ENCODE measurements at regions of chr3 and their contacts with region 1.

Region 1: DNA sequence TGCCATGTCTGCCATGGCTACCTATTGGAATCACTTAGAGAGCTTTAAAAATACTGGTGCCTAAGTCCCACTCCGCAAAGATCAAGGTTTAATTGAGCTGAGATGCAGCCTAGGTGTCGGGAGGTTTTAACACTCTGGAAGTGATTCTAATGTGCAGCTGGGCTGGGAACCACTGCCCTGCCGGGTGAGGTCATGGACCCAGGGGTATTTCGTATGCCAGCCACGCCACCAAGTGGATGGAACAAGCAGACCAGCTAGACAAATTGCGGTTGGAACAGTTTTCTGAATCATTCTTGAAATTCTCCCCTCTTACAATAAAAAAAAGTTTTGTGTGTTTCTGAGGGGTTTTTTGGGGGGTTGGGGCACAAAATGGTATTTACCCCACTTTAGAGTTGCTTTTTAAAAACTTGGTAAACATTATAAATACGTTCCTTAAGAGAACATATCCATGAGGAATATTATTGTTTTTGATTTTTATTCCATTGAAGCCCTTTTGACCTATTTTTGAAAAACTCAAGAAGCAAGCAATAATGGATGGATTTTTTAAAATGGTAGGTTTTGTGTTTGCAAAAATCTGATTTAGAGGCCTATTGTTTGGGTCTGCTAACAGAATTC is 66.2 kb upstream of the CSTA start:
- DNase-seq: peak; percentile 81
- H3K4me3 Mint-ChIP-seq: no peak overlapping the region
- H3K27ac Mint-ChIP-seq: peak overlapping the region; percentile 45
- H3K4me1 Mint-ChIP-seq: peaks cover 19% of the 10 kb centered on the region
- H3K27me3 Mint-ChIP-seq: peaks cover 15% of the 10 kb centered on the region

Region 2: GRCh38 chr3:121660356-121661171 is 598.3 kb before region 1 on chr3 and contains the start of gene HCLS1:
- CTCF ChIA-PET with region 1: no interaction called
- POLR2A ChIA-PET with region 1: no interaction called
- intact Hi-C with region 1: loop called (anchors 5 kb)
- DNase-seq: peak; percentile 83
- H3K4me3 Mint-ChIP-seq: peak within 1 kb of the TSS; percentile 97
- H3K27ac Mint-ChIP-seq: peak within 1 kb of the TSS; percentile 100
- H3K4me1 Mint-ChIP-seq: peaks cover 47% of the 10 kb centered on the region
- H3K27me3 Mint-ChIP-seq: no peaks in the 10 kb centered on the region
- total RNA-seq, gene HCLS1: 249 to 251 TPM

Region 3: DNA sequence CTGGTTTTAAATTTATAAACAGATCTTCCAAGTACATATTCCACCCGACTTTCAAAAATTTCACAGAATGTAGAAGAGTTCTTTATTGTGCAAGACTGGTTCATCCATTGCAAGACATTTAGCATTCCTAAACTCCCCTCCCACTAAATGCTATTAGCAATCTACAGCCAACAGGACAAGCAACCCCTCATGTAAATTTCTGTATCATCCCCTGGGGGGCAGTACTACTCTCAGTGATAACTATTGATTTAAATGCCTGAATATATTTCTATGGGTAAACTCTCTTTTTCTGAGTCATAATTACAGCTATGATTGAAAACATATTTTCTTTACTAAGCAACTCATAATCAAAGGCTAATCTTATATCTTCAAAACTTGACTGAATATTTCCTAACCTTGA is 375.4 kb before region 1 on chr3:
- CTCF ChIA-PET with region 1: interaction called, 3 read pairs
- POLR2A ChIA-PET with region 1: no interaction called
- intact Hi-C with region 1: loop called (anchors 1 kb)
- DNase-seq: no peak
- H3K4me3 Mint-ChIP-seq: no peak overlapping the region
- H3K27ac Mint-ChIP-seq: no peak overlapping the region
- H3K4me1 Mint-ChIP-seq: peaks cover 2% of the 10 kb centered on the region
- H3K27me3 Mint-ChIP-seq: no peaks in the 10 kb centered on the region

Region 4: DNA sequence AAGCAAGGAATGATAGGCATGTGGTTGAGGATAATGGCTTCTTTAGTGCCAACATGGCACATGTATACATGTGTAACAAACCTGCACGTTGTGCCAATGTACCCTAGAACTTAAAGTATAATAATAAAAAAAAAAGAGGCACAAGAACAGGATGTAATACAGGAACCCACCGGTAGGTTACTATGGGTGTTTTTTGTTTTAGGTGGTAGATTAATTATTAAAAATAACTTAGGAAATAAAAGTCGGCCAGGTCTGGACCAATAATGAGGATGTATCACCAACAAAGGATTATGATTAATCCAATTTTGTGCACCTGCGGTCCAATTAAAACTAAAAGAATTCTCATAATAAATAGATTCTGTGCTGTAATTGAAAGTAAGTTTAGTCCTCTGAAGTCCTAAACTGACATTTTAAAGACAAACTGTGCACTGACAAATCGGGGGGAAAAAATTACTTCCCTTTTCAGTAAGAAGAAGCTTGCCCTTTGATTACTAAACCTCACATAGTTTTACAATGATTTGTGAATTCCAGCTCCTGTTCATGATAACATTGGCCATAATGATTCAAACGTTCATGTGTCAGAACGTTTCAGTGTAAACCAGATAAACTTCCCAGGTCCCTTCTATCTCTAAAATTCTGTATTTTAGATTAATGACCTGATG is 13.2 kb before region 1 on chr3:
- CTCF ChIA-PET with region 1: interaction called, 8 read pairs
- POLR2A ChIA-PET with region 1: interaction called, 4 read pairs
- intact Hi-C with region 1: loop called (anchors 1 kb)
- DNase-seq: no peak
- H3K4me3 Mint-ChIP-seq: peak overlapping the region; percentile 48
- H3K27ac Mint-ChIP-seq: peak overlapping the region; percentile 43
- H3K4me1 Mint-ChIP-seq: peaks cover 16% of the 10 kb centered on the region
- H3K27me3 Mint-ChIP-seq: peaks cover 12% of the 10 kb centered on the region

Region 5: GRCh38 chr3:122365073-122365472 is 106.2 kb after region 1 on chr3:
- CTCF ChIA-PET with region 1: no interaction called
- POLR2A ChIA-PET with region 1: no interaction called
- intact Hi-C with region 1: loop called (anchors 5 kb)
- DNase-seq: no peak
- H3K4me3 Mint-ChIP-seq: no peak overlapping the region
- H3K27ac Mint-ChIP-seq: peak overlapping the region; percentile 94
- H3K4me1 Mint-ChIP-seq: peaks cover 26% of the 10 kb centered on the region
- H3K27me3 Mint-ChIP-seq: no peaks in the 10 kb centered on the region